Sciatic nerve (tissue), 2 donors: ENCODE measurements at regions of chr7 and their contacts with region 1.

Region 1: GRCh38 chr7:109354000-109354399 is 784.3 kb downstream of the DNAJB9 start:
- DNase-seq: no peak
- ATAC-seq: no peak

Region 2: DNA sequence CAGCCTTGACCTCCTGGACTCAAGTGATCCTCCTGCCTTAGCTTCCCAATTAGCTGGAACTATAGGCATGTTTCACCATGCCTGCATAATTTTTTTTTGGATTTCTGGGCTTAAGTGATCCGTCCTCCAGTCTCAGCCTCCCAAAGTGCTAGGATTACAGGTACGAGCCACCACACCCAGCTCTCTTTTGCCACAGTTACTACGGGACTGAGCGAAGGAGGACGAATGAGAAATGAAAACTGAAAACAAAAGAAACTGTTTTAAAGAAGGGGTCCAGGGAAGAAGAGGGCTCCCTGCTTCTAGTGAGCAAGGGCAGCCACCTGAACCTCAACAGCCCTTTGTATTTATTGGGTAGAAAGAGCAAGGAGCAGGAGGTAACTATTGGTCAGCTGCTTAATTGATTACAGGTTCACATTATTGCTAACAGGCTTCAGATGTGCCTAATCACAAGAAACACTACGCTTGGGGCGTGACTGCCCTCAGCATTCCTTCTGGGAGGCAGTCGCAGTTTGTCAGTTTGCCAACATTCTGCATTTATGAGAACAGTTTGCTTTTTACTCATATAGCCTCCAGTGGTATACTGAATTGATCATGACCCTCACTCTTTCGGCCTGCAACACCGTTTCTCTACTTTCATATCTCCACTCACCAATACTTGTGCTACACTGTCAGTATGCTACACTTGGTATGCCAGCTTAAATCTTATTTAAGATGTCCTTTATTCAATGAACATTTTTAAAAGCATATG is 107.5 kb before region 1 on chr7:
- intact Hi-C with region 1: no loop called
- DNase-seq: no peak
- ATAC-seq: no peak

Region 3: GRCh38 chr7:110010359-110010758 is 656.4 kb after region 1 on chr7:
- intact Hi-C with region 1: loop called (anchors 5 kb)
- DNase-seq: no peak
- ATAC-seq: no peak